ENCODE measurements at regions of chr1 and their contacts with region 1.

Region 1: GRCh38 chr1:3069491-3070303 is 694 bp downstream of the PRDM16 start:
- DNase-seq: peak; percentile 26
- ATAC-seq: peak; percentile 72
- H3K4me3 ChIP-seq: peak overlapping the region; percentile 48 to 82
- H3K27ac ChIP-seq: peak overlapping the region; percentile 64
- H3K4me1 ChIP-seq: no peaks in the 10 kb centered on the region; a peak in 1 of 4 replicates
- H3K27me3 ChIP-seq: no peaks in the 10 kb centered on the region
- CTCF ChIP-seq: peak in 2 of 3 experiments; percentile 34 to 39; a peak in 2 of 6 replicates
- POLR2A ChIP-seq: no peak
- RAD21 ChIP-seq: no peak; the same call in 1 of the 2 replicates

Region 2: DNA sequence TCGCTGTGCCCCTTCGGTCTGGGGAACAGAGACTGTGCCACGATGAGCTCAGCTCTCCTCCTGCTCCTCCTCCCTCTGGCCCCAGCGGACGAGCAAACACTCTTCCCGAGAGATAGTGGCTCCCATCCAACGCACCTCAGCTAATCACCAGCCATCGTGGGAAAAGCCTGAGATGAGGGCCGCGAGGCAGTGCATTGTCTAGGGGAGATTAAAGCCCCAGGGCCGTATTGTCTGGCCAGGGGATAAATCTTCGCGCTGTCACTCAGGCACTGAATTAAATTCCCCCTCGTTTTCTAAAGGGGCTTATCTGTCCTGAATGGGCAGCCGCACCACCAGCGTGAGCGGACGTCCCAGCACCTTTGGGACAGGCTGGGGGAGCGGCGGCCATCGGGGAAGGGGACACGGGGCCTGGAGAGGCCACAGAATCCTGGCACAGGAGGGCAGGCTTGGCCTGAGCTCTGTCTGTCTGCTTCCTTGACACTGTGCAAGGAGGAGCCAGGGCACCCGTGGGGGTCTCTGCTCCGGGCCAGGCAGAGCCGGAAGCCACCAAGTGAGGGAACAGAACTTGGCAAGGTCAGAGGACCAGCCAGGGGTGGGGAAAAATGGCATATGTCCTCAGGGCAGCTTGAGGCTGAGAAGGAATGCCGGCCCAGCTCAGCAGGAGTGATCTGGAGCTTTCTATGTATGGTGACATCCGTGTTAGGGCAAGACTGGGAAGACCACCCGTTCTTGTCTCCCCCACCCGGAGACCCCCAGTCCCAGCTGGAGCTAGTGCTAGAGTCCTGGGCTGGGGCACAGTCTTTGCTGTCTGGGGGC is 31.6 kb after region 1 on chr1:
- CTCF ChIA-PET with region 1: no interaction called
- POLR2A ChIA-PET with region 1: no interaction called
- RAD21 ChIA-PET with region 1: no interaction called
- intact Hi-C with region 1: no loop called
- DNase-seq: no peak
- ATAC-seq: no peak
- H3K4me3 ChIP-seq: no peak overlapping the region
- H3K27ac ChIP-seq: no peak overlapping the region
- H3K4me1 ChIP-seq: no peaks in the 10 kb centered on the region
- H3K27me3 ChIP-seq: no peaks in the 10 kb centered on the region
- CTCF ChIP-seq: no peak
- POLR2A ChIP-seq: no peak
- RAD21 ChIP-seq: no peak

Region 3: DNA sequence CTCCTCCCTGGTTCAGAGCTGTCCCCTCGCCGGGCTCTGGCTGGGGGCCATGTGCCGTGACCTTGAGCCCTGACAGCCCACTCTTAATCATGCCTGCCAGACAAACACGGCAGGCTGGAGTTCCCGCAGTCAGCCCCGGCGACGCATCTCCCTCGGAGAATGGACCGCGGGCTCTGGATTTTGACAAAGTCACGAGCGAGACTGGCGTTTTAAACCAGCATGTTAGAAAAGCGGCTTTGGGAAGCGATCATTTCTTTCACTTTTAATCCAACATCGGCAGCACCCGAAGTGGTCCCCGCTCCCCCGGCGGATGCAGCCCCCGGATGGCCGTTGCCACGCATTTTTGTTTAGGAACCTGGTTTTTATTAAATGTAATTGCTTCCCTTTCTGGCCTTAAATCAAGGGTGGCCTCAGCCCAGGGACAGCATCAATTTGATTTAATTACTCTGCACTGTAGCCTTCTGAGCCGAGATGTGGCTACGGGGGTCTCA is 70.2 kb after region 1 on chr1:
- CTCF ChIA-PET with region 1: no interaction called
- POLR2A ChIA-PET with region 1: no interaction called
- RAD21 ChIA-PET with region 1: no interaction called
- intact Hi-C with region 1: no loop called
- DNase-seq: no peak
- ATAC-seq: no peak
- H3K4me3 ChIP-seq: no peak overlapping the region
- H3K27ac ChIP-seq: no peak overlapping the region
- H3K4me1 ChIP-seq: no peaks in the 10 kb centered on the region
- H3K27me3 ChIP-seq: no peaks in the 10 kb centered on the region
- CTCF ChIP-seq: no peak
- POLR2A ChIP-seq: no peak
- RAD21 ChIP-seq: no peak

Region 4: DNA sequence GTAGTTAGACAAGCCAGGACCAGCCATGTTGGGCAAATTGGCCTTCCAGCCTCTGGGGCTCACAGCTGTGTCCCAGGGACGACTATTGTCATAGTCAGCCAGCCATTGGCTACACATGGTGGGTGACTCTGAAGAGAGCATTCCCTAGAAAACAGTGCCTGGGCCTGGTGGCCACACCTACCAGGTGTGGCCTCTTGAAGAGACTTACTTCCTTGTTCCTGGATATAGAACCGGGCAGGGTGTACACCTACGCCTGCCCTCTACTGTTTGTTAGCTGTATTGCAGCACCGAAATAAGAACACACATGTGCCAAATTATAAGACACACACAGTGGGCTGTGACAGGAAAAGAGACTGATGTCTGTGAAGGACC is 250.2 kb after region 1 on chr1:
- CTCF ChIA-PET with region 1: no interaction called
- POLR2A ChIA-PET with region 1: no interaction called
- RAD21 ChIA-PET with region 1: no interaction called
- intact Hi-C with region 1: loop called (anchors 10 kb)
- DNase-seq: peak; percentile 85
- ATAC-seq: peak; percentile 96
- H3K4me3 ChIP-seq: no peak overlapping the region
- H3K27ac ChIP-seq: peak overlapping the region; percentile 28; the same call in 1 of the 2 replicates
- H3K4me1 ChIP-seq: peaks cover 22 to 38% of the 10 kb centered on the region in 2 experiments
- H3K27me3 ChIP-seq: no peaks in the 10 kb centered on the region
- CTCF ChIP-seq: peak; percentile 70 to 91 (median 87); a peak in 5 of 6 replicates
- POLR2A ChIP-seq: no peak
- RAD21 ChIP-seq: peak; percentile 81